ENCODE measurements at regions of chr2 and their contacts with region 1.

Region 1: GRCh38 chr2:23939987-23940717 is at the start of gene UBXN2A:
- DNase-seq: peak; percentile 76 to 78
- H3K4me3 ChIP-seq: peak within 1 kb of the TSS; percentile 55 to 74 (median 58)
- H3K27ac ChIP-seq: peak within 1 kb of the TSS; percentile 61 to 91 (median 91)
- H3K4me1 ChIP-seq: peaks cover 7 to 13% of the 10 kb centered on the region in 2 donors
- H3K27me3 ChIP-seq: no peaks in the 10 kb centered on the region
- CTCF ChIP-seq: no peak
- POLR2A ChIP-seq: peak; percentile 29 to 86
- total RNA-seq, gene UBXN2A: 10.7 to 14.9 (median 13.7) TPM

Region 2: DNA sequence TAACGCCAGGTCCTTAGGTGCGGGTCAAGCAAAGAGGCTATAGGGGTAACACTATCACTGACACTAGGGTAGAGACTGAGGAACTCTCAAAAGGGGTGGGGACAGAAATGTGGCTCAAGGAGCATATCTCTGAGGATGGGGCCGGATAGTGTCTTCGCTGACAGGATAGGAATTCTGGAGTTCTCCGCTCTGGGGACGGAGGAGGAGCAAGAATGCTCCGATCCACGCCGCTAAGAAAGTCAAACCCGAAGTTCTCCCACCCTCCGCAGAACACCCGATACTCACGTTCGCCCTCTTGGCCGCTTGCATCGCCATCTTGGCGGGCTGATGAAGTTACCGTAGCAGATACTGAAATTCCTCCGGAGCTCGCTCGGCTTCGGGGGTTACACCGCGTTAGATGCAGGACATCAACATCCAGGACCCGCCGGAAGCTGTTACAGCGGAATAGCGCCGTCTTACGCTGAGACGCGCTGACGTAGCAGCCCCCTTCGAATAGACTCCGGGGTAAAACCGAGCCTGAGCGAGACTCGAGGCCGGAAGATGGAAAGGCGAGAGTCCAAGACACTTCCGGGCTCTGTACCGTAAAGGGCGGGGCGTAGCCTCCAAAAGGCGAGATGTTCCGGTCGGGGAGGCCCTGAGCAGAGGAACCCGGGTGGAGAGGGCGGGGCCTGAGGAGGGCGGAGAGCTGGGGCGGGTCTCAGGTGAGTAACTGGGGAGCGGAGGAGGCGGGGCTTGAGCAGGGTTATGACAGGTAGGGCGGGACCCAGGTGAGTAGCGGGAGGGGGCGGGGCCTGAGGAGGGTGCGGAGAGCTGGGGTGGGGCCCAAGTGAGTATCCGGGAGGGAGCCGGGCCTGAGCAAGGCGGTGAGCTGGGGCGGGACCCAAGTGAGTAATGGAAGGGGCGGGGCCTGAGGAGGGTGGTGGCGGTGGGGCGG is 136.0 kb after region 1 on chr2 and contains the start of gene SF3B6:
- intact Hi-C with region 1: loop called (anchors 10 kb)
- DNase-seq: peak; percentile 100
- H3K4me3 ChIP-seq: peak within 1 kb of the TSS; percentile 63 to 94 (median 79)
- H3K27ac ChIP-seq: peak within 1 kb of the TSS; percentile 86 to 91 (median 91)
- H3K4me1 ChIP-seq: peaks cover 3 to 29% of the 10 kb centered on the region in 2 donors
- H3K27me3 ChIP-seq: no peaks in the 10 kb centered on the region
- CTCF ChIP-seq: peak in 1 of 6 experiments; percentile 6
- POLR2A ChIP-seq: peak in 1 of 2 donors; percentile 80
- total RNA-seq, gene SF3B6: 86.1 to 157 (median 110) TPM

Region 3: GRCh38 chr2:24111407-24111901 is 171.3 kb after region 1 on chr2:
- intact Hi-C with region 1: no loop called
- DNase-seq: no peak
- H3K4me3 ChIP-seq: no peak overlapping the region
- H3K27ac ChIP-seq: no peak overlapping the region
- H3K4me1 ChIP-seq: no peaks in the 10 kb centered on the region
- H3K27me3 ChIP-seq: no peaks in the 10 kb centered on the region
- CTCF ChIP-seq: no peak
- POLR2A ChIP-seq: no peak

Measured in thyroid gland (tissue), 4 donors.